ENCODE measurements at regions of chr6 and their contacts with region 1.

Region 1: GRCh38 chr6:166950443-166950821 is 5.9 kb downstream of the RNASET2 start:
- DNase-seq: peak; percentile 59
- H3K4me3 Mint-ChIP-seq: peak overlapping the region; percentile 79
- H3K27ac Mint-ChIP-seq: peak overlapping the region; percentile 99
- H3K4me1 Mint-ChIP-seq: peaks cover 63% of the 10 kb centered on the region
- H3K27me3 Mint-ChIP-seq: no peaks in the 10 kb centered on the region

Region 2: DNA sequence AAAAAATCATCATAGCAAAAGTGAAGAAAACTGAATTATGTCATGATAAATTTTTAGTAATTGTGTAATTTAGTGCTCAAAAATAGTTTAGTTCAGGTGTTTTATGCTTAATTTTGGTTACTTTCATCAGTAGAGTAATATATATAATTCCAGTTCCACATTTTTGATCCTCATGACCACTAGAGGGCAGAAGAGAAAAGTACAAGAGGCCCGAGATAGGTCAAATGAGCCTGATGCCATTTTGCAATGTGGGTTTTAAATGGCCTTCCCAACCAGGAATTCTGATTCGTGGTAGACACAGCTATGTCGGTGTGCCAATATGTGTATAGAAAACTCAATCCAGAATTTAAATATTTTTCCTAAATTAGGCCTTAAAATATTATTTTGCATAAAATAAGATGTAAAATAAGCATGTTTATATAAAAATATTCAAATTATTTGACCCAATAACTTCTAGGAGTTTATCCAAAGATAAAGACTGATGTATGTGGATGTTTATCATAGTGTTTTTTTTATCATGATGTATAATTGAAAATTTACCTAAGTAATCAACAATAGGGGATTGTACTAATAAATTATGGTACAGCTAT is 163.6 kb before region 1 on chr6:
- CTCF ChIA-PET with region 1: interaction called, 5 read pairs
- POLR2A ChIA-PET with region 1: no interaction called
- intact Hi-C with region 1: loop called (anchors 1 kb)
- DNase-seq: no peak
- H3K4me3 Mint-ChIP-seq: no peak overlapping the region
- H3K27ac Mint-ChIP-seq: no peak overlapping the region
- H3K4me1 Mint-ChIP-seq: no peaks in the 10 kb centered on the region
- H3K27me3 Mint-ChIP-seq: peaks cover 1% of the 10 kb centered on the region

Region 3: DNA sequence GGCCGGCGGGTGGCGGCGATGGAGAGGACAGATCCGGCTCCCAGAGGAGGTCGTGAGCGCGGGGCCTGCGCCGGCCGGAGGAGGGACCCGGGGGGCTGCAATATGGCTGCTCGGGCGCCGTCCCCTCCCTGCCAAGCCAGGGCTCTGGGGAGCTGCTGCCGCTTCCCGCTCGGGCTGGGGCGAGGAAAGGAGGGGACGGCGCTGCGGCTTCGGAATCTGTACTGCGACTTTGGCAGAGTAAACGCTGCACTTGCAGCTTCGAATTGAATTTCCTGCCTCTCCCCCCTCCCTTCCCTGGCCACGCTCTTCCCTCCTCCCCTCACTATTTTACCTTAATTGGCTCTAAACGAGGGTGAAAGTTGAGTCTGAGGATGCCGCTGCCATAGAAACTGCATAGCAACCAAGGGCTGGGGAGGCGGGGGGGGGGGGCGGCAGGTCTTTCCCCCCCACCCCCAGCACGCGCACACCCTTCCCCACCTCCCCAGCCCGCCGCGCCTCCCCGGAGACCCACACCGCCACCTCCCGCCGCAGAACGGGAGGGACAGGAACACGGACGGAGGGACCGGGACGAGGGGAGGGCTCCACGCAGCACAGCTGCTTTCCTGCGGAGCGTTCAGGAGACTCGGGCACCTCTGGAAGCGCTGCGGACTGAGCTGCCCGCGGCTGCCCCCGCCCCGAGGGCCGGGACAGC is 88.0 kb before region 1 on chr6:
- CTCF ChIA-PET with region 1: interaction called, 4 read pairs
- POLR2A ChIA-PET with region 1: no interaction called
- intact Hi-C with region 1: loop called (anchors 2 kb)
- DNase-seq: peak; percentile 53
- H3K4me3 Mint-ChIP-seq: peak overlapping the region; percentile 75
- H3K27ac Mint-ChIP-seq: no peak overlapping the region
- H3K4me1 Mint-ChIP-seq: peaks cover 6% of the 10 kb centered on the region
- H3K27me3 Mint-ChIP-seq: peaks cover 2% of the 10 kb centered on the region

Region 4: DNA sequence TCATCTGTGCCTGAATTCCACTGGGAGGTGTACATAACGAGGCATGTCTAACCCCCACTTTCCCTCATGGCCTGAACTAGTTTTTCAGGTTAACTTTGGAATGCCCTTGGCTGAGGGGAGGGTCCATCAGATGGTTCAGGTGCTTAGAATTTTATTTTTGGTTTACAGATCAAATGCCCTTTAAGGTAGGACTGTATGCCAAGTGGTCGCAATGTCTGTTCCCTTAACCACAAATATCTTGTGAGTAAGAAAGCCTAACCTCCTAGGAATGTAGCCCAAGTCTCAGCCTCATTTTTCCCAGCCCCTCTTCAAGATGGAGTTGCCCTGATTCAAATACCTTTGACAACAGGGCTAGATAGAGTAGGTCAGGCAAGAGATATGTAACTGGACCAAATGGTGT is 72.5 kb before region 1 on chr6:
- CTCF ChIA-PET with region 1: no interaction called
- POLR2A ChIA-PET with region 1: no interaction called
- intact Hi-C with region 1: no loop called
- DNase-seq: no peak
- H3K4me3 Mint-ChIP-seq: no peak overlapping the region
- H3K27ac Mint-ChIP-seq: no peak overlapping the region
- H3K4me1 Mint-ChIP-seq: peaks cover 2% of the 10 kb centered on the region
- H3K27me3 Mint-ChIP-seq: no peaks in the 10 kb centered on the region

Region 5: GRCh38 chr6:166989427-166990032 is 39.1 kb after region 1 on chr6:
- CTCF ChIA-PET with region 1: interaction called, 39 read pairs
- POLR2A ChIA-PET with region 1: interaction called, 6 read pairs
- intact Hi-C with region 1: loop called (anchors 2 kb)
- DNase-seq: peak; percentile 53
- H3K4me3 Mint-ChIP-seq: no peak overlapping the region
- H3K27ac Mint-ChIP-seq: no peak overlapping the region
- H3K4me1 Mint-ChIP-seq: peaks cover 24% of the 10 kb centered on the region
- H3K27me3 Mint-ChIP-seq: no peaks in the 10 kb centered on the region

Region 6: DNA sequence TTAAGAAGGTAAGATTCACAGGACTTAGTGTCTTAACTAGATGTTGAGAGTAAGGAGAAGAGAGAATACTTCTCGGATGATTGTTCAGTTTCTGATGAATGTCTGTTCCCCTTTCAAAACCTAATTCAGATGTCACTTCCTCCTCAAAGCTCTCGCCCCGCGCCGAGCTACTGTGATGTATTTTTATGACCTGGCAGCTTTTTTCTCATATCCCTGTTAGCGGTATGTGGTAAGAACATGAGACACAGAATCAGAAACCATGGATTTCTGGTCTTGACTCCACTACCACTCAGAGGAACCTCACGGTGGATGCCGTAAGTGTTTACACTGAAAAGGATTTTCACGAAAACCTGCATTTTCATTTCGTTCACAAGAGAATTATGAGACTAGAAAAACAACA is 97.1 kb after region 1 on chr6:
- CTCF ChIA-PET with region 1: interaction called, 4 read pairs
- POLR2A ChIA-PET with region 1: interaction called, 7 read pairs
- intact Hi-C with region 1: loop called (anchors 1 kb)
- DNase-seq: peak; percentile 88
- H3K4me3 Mint-ChIP-seq: peak overlapping the region; percentile 60
- H3K27ac Mint-ChIP-seq: peak overlapping the region; percentile 76
- H3K4me1 Mint-ChIP-seq: peaks cover 48% of the 10 kb centered on the region
- H3K27me3 Mint-ChIP-seq: no peaks in the 10 kb centered on the region

Region 7: GRCh38 chr6:167153521-167153959 is 203.1 kb after region 1 on chr6:
- CTCF ChIA-PET with region 1: no interaction called
- POLR2A ChIA-PET with region 1: no interaction called
- intact Hi-C with region 1: loop called (anchors 1 kb)
- DNase-seq: peak; percentile 43
- H3K4me3 Mint-ChIP-seq: peak overlapping the region; percentile 8
- H3K27ac Mint-ChIP-seq: no peak overlapping the region
- H3K4me1 Mint-ChIP-seq: peaks cover 24% of the 10 kb centered on the region
- H3K27me3 Mint-ChIP-seq: peaks cover 2% of the 10 kb centered on the region

Measured in activated CD4-positive, alpha-beta memory T cell treated with anti-CD3 and anti-CD28 coated beads for 36 hours (primary cell).